GM10248 (cell line): ENCODE measurements at regions of chr17 and their contacts with region 1.

Region 1: DNA sequence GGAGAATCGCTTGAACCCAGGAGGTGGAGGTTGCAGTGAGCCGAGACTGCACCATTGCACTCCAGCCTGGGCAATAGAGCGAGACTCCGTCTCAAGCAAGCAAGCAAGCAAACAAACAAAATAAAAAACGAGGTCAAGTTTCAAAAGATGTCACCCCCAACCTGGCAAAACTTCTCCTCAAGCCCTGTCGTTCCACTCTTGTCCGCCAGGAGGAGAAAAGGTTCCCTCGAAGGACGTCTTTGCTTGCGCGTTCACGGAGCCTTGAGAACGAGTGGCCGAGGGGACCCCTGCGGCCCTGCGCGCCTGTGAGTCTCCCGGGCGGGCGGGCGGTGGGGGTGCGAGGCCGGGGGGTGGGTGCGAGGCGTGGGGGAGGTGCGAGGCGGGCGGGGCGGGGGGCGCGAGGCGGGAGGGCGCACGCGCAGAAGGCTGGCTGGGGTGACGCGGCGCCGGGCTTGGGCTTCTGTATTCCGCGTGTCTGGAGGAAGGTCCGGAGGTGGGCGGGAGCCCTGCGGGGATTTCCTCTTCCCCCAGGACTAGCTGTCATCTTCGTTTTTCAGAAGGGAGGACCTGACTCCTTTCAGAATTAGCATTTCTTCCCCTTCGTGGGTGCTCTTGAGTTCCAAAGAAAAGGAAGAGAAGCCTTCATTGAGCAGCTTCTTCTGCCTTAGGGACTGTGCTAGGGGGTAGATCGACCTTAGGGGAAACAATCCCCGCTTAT is 3.7 kb downstream of the SLC52A1 start:
- DNase-seq: peak; percentile 91
- CTCF ChIP-seq: peak; percentile 73

Region 2: GRCh38 chr17:4891411-4892342 is 139.8 kb before region 1 on chr17:
- CTCF ChIA-PET with region 1: no interaction called
- POLR2A ChIA-PET with region 1: no interaction called
- DNase-seq: no peak
- CTCF ChIP-seq: no peak

Region 3: DNA sequence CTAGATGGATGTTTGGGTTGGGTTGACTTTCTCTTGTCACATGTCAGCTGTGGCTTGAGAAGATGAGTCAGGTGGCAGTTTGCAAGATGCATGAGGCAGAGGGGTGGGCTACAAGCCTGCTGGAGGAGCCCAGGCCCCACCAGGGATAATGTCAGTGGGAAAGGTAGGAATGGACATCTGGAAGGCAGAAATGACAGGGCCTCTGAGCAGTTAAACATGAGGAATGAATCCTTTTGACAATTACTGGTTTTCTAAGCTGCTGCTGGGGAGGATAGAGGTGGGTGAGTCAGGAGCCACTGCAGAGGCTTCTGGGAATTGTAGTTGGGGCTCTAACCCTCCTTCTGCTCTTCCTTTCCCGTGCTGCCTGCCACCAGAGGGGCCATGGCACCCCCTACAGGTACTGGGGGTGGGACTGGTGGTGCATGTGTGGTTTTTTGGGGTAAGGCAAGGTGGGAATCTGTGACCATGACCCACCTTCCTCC is 12.0 kb before region 1 on chr17:
- CTCF ChIA-PET with region 1: interaction called, 35 read pairs
- POLR2A ChIA-PET with region 1: interaction called, 9 read pairs
- DNase-seq: no peak
- CTCF ChIP-seq: peak; percentile 1

Region 4: DNA sequence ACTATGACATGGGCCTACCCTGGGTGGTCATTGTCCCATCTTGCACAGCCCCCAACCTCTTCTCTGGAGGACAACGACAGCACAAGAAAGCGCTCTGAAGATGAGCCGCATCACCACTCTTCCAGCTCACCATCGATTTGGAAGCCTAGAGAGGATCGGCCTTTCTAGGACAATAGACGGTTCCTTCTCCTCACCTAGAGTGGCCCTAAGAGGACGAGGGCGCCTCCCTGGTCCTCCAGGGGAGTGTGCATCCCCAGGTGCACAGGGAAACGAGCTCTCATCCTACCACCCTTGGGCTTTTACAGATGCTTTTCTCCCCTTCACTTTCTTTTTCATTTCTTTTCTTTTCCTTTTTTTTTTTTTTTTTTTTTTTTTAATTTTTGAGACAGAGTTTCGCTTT is 24.0 kb after region 1 on chr17:
- CTCF ChIA-PET with region 1: interaction called, 52 read pairs
- POLR2A ChIA-PET with region 1: interaction called, 6 read pairs
- DNase-seq: no peak
- CTCF ChIP-seq: no peak

Region 5: DNA sequence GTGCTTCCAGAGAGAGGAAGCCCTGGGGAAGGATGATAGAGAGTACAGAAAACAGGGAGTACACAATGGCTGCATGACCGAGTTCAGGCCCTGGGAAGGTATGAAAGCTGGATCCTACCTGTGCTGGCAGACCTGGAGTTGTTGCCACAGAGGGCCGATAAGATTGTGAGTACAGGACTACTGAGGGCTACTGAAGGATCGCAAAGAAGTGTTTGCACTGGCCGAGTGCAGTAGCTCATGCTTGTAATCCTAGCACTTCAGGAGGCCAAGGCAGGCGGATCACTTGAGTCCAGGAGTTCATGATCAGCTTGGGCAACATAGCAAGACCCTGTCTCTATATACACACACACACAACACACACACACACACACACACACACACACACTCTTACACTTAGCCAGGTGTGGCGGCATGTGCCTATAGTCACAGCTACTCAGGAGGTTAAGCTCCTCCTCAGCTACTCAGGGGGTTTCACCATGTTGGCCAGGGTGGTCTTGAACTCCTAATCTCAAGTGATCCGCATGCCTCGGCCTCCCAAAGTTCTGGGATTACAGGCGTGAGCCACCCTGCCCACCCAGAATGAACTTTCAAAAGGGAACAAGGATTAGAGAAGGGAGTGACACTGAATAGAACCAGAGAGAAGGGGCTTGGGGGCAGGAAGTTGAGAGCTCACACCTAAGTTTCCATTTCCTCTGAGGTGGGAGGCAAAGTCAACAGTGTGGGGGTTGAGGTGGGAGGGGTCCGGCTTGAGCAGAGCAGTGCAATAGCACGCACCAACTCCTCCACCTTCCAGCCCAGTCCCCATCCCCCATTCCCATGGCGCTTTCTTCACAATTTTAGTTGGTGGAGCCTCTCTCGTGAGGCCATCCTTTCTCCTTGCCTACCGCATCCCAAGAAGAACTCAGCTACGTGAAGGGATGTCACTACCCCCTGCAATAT is 195.7 kb after region 1 on chr17:
- CTCF ChIA-PET with region 1: no interaction called
- POLR2A ChIA-PET with region 1: no interaction called
- DNase-seq: peak; percentile 61
- CTCF ChIP-seq: no peak